Heart left ventricle (tissue), 16 donors: ENCODE measurements at regions of chr20 and their contacts with region 1.

Region 1: GRCh38 chr20:22700367-22700766 is 116.0 kb upstream of the FOXA2 start:
- DNase-seq: no peak
- ATAC-seq: no peak
- H3K4me3 ChIP-seq: no peak overlapping the region
- H3K27ac ChIP-seq: no peak overlapping the region
- H3K4me1 ChIP-seq: peaks cover 0 to 15% (median under 1%) of the 10 kb centered on the region in 12 donors
- H3K27me3 ChIP-seq: no peaks in the 10 kb centered on the region
- CTCF ChIP-seq: no peak
- POLR2A ChIP-seq: no peak

Region 2: DNA sequence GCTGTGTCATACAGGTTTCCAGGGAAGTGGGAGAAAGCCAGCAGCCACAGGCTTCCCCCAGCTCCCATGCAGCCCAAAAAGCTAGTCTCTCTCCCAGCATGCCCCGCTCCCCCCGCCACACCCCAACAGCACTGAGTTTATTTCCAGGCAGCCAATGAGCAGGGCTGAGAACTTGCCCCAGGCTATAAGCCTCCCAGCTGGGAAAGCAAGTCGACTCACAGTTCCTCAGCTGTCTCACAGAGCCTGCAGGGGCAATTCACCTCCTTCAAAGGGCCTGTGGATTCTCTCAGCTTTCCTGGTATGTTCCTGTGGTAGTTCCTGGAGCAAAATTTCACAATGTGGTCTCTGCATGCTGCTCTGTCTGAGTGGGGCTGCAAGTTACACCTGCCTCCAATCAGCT is 960.7 kb before region 1 on chr20:
- intact Hi-C with region 1: no loop called
- DNase-seq: no peak
- ATAC-seq: no peak
- H3K4me3 ChIP-seq: no peak overlapping the region
- H3K27ac ChIP-seq: no peak overlapping the region
- H3K4me1 ChIP-seq: no peaks in the 10 kb centered on the region
- H3K27me3 ChIP-seq: peaks cover 0 to 6% (median 0%) of the 10 kb centered on the region in 9 donors
- CTCF ChIP-seq: no peak
- POLR2A ChIP-seq: no peak

Region 3: DNA sequence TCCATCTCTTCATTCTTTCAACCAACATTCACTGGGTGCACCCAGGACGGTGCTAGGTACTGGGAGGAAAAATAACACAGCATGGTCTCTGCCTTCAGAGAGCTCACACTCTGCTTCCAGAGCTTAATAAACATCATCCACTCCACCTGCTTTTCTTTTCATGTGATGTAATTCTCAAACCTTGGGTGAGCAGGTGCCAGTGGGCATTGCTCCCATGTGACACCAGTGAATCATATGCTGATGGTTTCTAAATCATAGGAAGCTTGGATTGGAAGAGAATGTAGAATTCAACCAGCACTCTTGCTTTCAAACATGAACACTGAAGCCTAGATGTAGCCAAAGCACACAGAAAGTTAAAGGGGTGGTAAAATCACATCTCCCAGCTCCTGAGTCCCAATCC is 305.8 kb before region 1 on chr20:
- intact Hi-C with region 1: no loop called
- DNase-seq: no peak
- ATAC-seq: no peak
- H3K4me3 ChIP-seq: no peak overlapping the region
- H3K27ac ChIP-seq: no peak overlapping the region
- H3K4me1 ChIP-seq: no peaks in the 10 kb centered on the region
- H3K27me3 ChIP-seq: peaks cover 0 to 44% (median 0%) of the 10 kb centered on the region in 9 donors
- CTCF ChIP-seq: no peak
- POLR2A ChIP-seq: no peak

Region 4: DNA sequence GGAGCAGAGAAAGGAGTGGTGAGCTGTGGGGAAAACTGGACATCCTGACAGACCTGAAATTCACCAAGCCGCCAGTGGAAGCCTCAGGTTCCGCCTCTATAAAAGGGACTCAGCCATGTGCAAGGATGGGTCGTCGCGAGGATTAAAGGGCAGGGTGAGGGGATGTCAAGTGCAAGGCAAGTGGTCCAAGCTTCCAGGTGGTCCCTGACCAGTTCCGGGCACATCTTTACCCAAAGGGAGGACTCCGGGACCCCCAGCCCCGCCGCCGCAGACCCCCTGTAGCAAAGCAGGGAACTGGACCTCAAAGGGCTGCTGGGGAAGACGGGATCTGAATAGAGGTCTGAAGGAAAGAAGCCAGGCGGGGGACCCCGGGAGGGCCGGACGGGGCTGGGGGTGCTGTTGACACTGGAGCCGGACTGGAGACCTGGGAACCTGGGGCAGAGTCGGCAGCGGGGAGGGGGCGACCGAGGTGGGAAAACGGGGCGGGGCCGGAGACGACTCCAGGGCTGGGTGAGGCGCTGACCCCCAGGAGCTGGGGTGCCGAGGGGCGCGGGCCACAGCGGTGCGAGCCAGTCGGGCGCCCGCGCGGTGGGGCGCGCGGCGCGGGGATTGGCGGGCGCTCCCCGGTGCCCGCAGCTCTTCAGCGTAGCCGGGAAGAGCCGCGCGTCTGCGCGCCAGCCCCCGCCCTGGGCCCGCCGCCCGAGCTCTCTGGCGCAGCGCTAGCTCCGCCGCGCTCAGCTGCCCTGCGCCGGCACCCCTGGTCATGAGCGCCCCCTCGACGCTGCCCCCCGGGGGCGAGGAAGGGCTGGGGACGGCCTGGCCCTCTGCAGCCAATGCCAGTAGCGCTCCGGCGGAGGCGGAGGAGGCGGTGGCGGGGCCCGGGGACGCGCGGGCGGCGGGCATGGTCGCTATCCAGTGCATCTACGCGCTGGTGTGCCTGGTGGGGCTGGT is 334.6 kb after region 1 on chr20 and contains the start of gene SSTR4:
- intact Hi-C with region 1: loop called in 1 of 10 experiments (anchors 5 kb)
- DNase-seq: no peak
- ATAC-seq: peak in 1 of 4 donors; percentile 38
- H3K4me3 ChIP-seq: peak within 1 kb of the TSS in 8 of 12 donors; percentile 10 to 52 (median 30)
- H3K27ac ChIP-seq: no peak within 1 kb of the TSS
- H3K4me1 ChIP-seq: peaks cover 0 to 27% (median 6%) of the 10 kb centered on the region in 12 donors
- H3K27me3 ChIP-seq: peaks cover 12 to 47% (median 28%) of the 10 kb centered on the region in 9 donors
- CTCF ChIP-seq: no peak
- POLR2A ChIP-seq: no peak
- total RNA-seq, gene SSTR4: 0.28 TPM in 1 of 9 donors, not detected in the others